Endothelial cell of umbilical vein (primary cell): ENCODE measurements at regions of chr4 and their contacts with region 1.

Region 1: GRCh38 chr4:15882675-15883086 is 55.9 kb downstream of the FGFBP1 start:
- DNase-seq: peak; percentile 72
- H3K4me3 ChIP-seq: no peak overlapping the region
- H3K27ac ChIP-seq: no peak overlapping the region
- H3K4me1 ChIP-seq: no peaks in the 10 kb centered on the region
- H3K27me3 ChIP-seq: no peaks in the 10 kb centered on the region
- CTCF ChIP-seq: peak; percentile 74 to 90
- POLR2A ChIP-seq: no peak

Region 2: DNA sequence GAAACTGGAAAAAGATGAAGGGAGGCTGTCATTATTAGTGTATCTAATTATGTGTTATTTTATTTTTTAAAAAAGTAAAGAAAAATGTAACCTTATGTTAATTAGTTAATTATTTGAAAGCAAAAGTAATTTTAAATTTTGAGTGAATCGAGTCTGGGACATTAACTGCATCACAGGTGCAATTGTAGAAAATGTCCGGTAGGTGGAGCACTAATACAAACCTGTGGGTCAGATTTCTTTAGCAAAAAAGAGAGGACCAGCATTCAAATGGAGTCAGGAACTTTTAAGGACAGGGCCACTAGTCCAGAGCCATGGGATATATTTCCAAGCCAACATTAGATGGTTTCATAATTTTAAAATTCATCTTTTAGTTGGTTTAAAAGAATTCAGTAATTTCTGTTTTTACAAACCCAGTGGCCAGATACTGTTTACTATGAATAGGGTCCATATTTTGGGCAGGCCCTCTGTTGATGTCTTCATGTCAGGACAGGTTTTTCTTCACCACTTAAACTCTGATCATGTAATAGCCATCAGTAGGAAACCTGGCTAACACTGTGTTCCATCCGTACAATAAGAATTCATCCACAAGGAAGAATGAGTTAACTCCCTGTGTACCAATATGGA is 152.7 kb before region 1 on chr4:
- CTCF ChIA-PET with region 1: interaction called, 5 read pairs
- POLR2A ChIA-PET with region 1: no interaction called
- dilution Hi-C with region 1: no loop called
- intact Hi-C with region 1: loop called (anchors 1 kb)
- DNase-seq: peak; percentile 41
- H3K4me3 ChIP-seq: no peak overlapping the region
- H3K27ac ChIP-seq: no peak overlapping the region
- H3K4me1 ChIP-seq: no peaks in the 10 kb centered on the region
- H3K27me3 ChIP-seq: no peaks in the 10 kb centered on the region
- CTCF ChIP-seq: peak; percentile 61 to 65
- POLR2A ChIP-seq: no peak

Region 3: GRCh38 chr4:15868806-15869410 is 13.8 kb before region 1 on chr4:
- CTCF ChIA-PET with region 1: interaction called, 14 read pairs
- POLR2A ChIA-PET with region 1: no interaction called
- dilution Hi-C with region 1: no loop called
- intact Hi-C with region 1: no loop called
- DNase-seq: no peak
- H3K4me3 ChIP-seq: no peak overlapping the region
- H3K27ac ChIP-seq: no peak overlapping the region
- H3K4me1 ChIP-seq: no peaks in the 10 kb centered on the region
- H3K27me3 ChIP-seq: peaks cover 0 to 3% of the 10 kb centered on the region in 2 experiments
- CTCF ChIP-seq: no peak
- POLR2A ChIP-seq: no peak

Region 4: GRCh38 chr4:15913631-15913970 is 30.9 kb after region 1 on chr4:
- CTCF ChIA-PET with region 1: interaction called, 20 read pairs
- POLR2A ChIA-PET with region 1: no interaction called
- dilution Hi-C with region 1: no loop called
- intact Hi-C with region 1: no loop called
- DNase-seq: peak; percentile 72
- H3K4me3 ChIP-seq: no peak overlapping the region
- H3K27ac ChIP-seq: peak overlapping the region; percentile 24
- H3K4me1 ChIP-seq: peaks cover 10% of the 10 kb centered on the region
- H3K27me3 ChIP-seq: no peaks in the 10 kb centered on the region
- CTCF ChIP-seq: no peak
- POLR2A ChIP-seq: no peak

Region 5: GRCh38 chr4:15936495-15936894 is 53.8 kb after region 1 on chr4:
- CTCF ChIA-PET with region 1: interaction called, 10 read pairs
- POLR2A ChIA-PET with region 1: no interaction called
- dilution Hi-C with region 1: no loop called
- intact Hi-C with region 1: no loop called
- DNase-seq: no peak
- H3K4me3 ChIP-seq: no peak overlapping the region
- H3K27ac ChIP-seq: no peak overlapping the region
- H3K4me1 ChIP-seq: no peaks in the 10 kb centered on the region
- H3K27me3 ChIP-seq: peaks cover 0 to 7% of the 10 kb centered on the region in 2 experiments
- CTCF ChIP-seq: no peak
- POLR2A ChIP-seq: no peak

Region 6: DNA sequence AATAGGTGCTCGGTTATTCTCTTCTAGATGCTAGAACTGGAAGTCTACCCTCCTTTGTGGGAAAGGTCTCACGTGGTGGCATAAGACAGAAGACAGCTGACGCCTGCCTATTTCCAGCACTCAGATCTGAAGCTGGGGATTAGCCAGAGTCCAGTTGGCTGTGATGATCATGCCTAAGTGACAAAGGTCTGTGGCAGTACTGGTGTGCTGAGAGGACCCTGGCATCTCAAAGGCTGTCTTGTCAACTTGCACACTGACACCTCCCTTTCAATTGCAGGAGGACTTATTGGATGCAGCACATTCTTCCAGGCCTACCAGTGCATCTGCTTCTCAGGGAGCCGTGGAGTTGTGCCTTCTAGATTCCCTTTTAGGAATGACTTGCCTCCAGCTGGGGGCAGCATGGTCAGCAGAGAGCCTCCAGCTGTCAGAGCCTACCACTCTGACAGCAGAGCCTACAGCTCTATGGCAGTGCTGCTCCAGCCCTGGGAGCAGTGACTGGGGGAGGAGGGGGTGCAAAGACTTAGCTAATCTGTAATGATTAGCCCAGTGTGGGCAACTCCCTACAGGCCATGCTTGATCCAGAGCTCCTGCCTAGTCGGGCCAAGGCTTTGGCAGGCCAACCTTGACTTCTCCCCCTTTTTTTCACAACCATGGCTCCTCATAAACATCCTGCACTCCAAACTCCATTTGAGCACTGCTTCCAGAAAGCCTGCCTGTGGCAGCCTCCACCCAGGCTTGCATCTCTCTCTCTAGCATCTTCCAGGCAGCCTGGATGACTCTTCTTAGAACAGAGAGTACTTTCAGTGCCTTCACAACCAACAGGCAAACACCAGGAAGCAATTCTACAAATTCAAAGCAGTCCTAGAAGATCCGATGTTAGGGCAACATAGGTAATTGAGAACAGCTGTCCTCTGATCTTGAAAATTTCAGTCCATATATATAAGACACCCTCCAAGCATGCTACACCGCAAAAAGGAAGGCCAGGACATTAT is 94.1 kb after region 1 on chr4:
- CTCF ChIA-PET with region 1: interaction called, 11 read pairs
- POLR2A ChIA-PET with region 1: no interaction called
- dilution Hi-C with region 1: no loop called
- intact Hi-C with region 1: no loop called
- DNase-seq: no peak
- H3K4me3 ChIP-seq: no peak overlapping the region
- H3K27ac ChIP-seq: no peak overlapping the region
- H3K4me1 ChIP-seq: no peaks in the 10 kb centered on the region
- H3K27me3 ChIP-seq: peaks cover 0 to 4% of the 10 kb centered on the region in 2 experiments
- CTCF ChIP-seq: peak in 1 of 2 donors; percentile 1
- POLR2A ChIP-seq: no peak